Activated naive CD4-positive, alpha-beta T cell treated with anti-CD3 and anti-CD28 coated beads for 36 hours (primary cell): ENCODE measurements at regions of chr3 and their contacts with region 1.

Region 1: GRCh38 chr3:25604107-25604805 is 60.5 kb downstream of the TOP2B start:
- DNase-seq: no peak
- H3K4me3 Mint-ChIP-seq: no peak overlapping the region
- H3K27ac Mint-ChIP-seq: no peak overlapping the region
- H3K4me1 Mint-ChIP-seq: no peaks in the 10 kb centered on the region
- H3K27me3 Mint-ChIP-seq: no peaks in the 10 kb centered on the region

Region 2: GRCh38 chr3:26437678-26438077 is 833.4 kb after region 1 on chr3:
- CTCF ChIA-PET with region 1: no interaction called
- intact Hi-C with region 1: loop called (anchors 5 kb)
- DNase-seq: no peak
- H3K4me3 Mint-ChIP-seq: no peak overlapping the region
- H3K27ac Mint-ChIP-seq: no peak overlapping the region
- H3K4me1 Mint-ChIP-seq: no peaks in the 10 kb centered on the region
- H3K27me3 Mint-ChIP-seq: no peaks in the 10 kb centered on the region